ENCODE measurements at regions of chr10 and their contacts with region 1.

Region 1: GRCh38 chr10:87861953-87862678 is 1.2 kb downstream of the KLLN start:
- DNase-seq: peak; percentile 96
- H3K4me3 Mint-ChIP-seq: peak overlapping the region; percentile 90
- H3K27ac Mint-ChIP-seq: peak overlapping the region; percentile 94
- H3K4me1 Mint-ChIP-seq: peaks cover 33% of the 10 kb centered on the region
- H3K27me3 Mint-ChIP-seq: no peaks in the 10 kb centered on the region

Region 2: GRCh38 chr10:87659571-87660483 is 202.3 kb before region 1 on chr10 and contains the start of gene PAPSS2:
- CTCF ChIA-PET with region 1: no interaction called
- POLR2A ChIA-PET with region 1: no interaction called
- intact Hi-C with region 1: loop called (anchors 5 kb)
- DNase-seq: peak; percentile 34
- H3K4me3 Mint-ChIP-seq: peak within 1 kb of the TSS; percentile 66
- H3K27ac Mint-ChIP-seq: no peak within 1 kb of the TSS
- H3K4me1 Mint-ChIP-seq: peaks cover 13% of the 10 kb centered on the region
- H3K27me3 Mint-ChIP-seq: peaks cover 53% of the 10 kb centered on the region
- total RNA-seq, gene PAPSS2: 0.22 to 0.40 TPM

Region 3: DNA sequence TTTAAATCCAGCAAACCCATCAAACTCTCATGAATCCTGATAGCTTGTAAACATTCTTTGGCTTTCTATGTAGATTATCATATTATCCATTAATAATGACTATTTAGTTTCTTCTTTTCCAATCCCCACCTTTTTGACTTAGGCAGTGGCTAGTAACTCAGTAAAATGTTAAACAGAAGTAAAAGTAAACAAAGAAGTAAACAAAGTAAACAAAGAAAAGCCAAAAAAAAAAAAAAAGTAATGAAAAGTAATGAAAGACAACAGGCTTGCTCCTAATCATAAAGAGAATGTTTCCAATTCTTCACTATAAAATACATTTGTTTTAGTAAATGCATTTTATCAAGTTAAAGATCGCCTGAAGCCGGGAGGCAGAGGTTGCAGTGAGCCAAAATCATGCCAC is 54.0 kb before region 1 on chr10:
- CTCF ChIA-PET with region 1: no interaction called
- POLR2A ChIA-PET with region 1: no interaction called
- intact Hi-C with region 1: no loop called
- DNase-seq: no peak
- H3K4me3 Mint-ChIP-seq: no peak overlapping the region
- H3K27ac Mint-ChIP-seq: no peak overlapping the region
- H3K4me1 Mint-ChIP-seq: peaks cover 30% of the 10 kb centered on the region
- H3K27me3 Mint-ChIP-seq: no peaks in the 10 kb centered on the region

Region 4: DNA sequence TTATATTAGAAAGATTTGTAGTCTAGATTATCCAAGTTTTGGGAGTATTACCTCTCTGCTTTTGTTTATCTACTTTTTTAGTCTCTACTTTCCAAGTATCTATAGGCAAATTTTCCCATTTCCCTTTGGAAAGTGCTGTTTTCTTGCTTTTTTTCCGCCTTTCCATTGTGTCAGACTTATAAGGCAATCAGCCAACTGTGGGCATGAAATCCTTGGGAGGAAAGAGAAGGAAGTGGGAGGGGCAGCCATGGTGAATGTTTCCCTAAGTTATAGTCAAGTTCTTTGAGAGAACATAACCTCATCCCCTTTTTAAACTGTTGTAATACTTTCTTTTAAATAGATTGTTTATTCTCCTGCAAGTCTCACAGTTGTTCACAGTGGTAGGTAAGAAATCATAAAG is 53.9 kb after region 1 on chr10:
- CTCF ChIA-PET with region 1: no interaction called
- POLR2A ChIA-PET with region 1: no interaction called
- intact Hi-C with region 1: loop called (anchors 5 kb)
- DNase-seq: no peak
- H3K4me3 Mint-ChIP-seq: no peak overlapping the region
- H3K27ac Mint-ChIP-seq: no peak overlapping the region
- H3K4me1 Mint-ChIP-seq: peaks cover 43% of the 10 kb centered on the region
- H3K27me3 Mint-ChIP-seq: no peaks in the 10 kb centered on the region

Region 5: DNA sequence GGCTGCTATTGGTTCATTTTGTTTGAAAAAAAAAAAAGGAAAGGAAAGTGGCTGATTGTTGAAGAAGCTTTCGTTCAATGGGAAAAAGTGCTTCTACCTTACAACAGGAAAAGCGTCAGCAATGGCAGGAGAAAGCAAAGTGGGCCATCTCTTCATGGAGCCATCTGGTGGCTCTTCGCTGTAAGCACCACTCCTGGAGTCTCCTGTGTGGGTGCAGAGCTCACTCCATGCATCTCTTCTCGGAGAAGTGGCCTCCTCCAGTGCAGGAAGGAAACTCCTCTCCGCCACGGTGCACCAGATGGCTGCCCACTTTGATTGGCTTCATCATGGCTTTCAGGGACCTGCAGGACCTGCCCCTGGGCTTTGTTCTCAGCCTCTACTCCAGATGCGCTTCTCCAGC is 252.3 kb after region 1 on chr10:
- CTCF ChIA-PET with region 1: interaction called, 15 read pairs
- POLR2A ChIA-PET with region 1: interaction called, 8 read pairs
- intact Hi-C with region 1: loop called (anchors 1 kb)
- DNase-seq: peak; percentile 25
- H3K4me3 Mint-ChIP-seq: no peak overlapping the region
- H3K27ac Mint-ChIP-seq: no peak overlapping the region
- H3K4me1 Mint-ChIP-seq: peaks cover 6% of the 10 kb centered on the region
- H3K27me3 Mint-ChIP-seq: peaks cover 2% of the 10 kb centered on the region

Region 6: DNA sequence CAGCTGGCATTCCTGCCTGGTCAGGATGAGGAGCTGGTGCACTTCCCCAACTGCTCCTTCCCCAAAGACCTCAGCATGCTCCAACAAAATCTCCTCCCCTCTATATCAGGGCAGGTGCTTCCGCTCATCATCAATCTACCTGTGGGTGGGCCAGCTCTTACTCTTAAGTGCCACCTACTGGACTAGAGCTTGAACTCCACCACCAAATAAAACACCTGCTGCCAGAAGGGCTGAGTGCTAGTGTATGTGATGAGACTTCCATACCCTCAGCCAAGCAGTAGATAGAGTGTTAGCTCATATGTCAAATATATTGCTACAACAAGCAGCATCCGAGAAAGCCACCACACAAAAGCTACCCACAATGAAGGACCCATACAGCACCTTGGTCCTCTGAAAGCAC is 456.7 kb after region 1 on chr10:
- CTCF ChIA-PET with region 1: interaction called, 3 read pairs
- POLR2A ChIA-PET with region 1: no interaction called
- intact Hi-C with region 1: loop called (anchors 5 kb)
- DNase-seq: no peak
- H3K4me3 Mint-ChIP-seq: no peak overlapping the region
- H3K27ac Mint-ChIP-seq: no peak overlapping the region
- H3K4me1 Mint-ChIP-seq: no peaks in the 10 kb centered on the region
- H3K27me3 Mint-ChIP-seq: no peaks in the 10 kb centered on the region

Region 7: DNA sequence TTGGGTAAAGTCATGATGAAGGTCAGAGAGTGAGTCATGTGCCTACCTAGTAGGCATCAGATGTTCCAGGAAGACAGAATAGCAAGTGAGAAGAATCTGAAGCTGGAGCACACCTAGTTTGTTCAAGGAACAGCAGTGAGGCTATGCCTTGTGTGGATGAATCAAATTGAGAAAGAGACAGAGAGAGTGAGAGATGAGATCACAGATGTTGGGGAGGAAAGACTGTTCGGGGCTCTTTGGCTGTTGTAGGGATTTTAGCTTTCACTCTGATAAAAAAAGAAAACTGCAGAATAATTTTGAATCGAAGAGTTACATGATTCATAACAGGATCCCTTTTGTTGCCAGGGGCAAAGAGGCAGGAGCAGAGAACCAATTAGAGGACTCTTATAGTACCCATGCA is 808.4 kb after region 1 on chr10:
- CTCF ChIA-PET with region 1: no interaction called
- POLR2A ChIA-PET with region 1: no interaction called
- intact Hi-C with region 1: loop called (anchors 5 kb)
- DNase-seq: peak; percentile 33
- H3K4me3 Mint-ChIP-seq: no peak overlapping the region
- H3K27ac Mint-ChIP-seq: peak overlapping the region; percentile 21
- H3K4me1 Mint-ChIP-seq: peaks cover 18% of the 10 kb centered on the region
- H3K27me3 Mint-ChIP-seq: peaks cover 7% of the 10 kb centered on the region

Region 8: DNA sequence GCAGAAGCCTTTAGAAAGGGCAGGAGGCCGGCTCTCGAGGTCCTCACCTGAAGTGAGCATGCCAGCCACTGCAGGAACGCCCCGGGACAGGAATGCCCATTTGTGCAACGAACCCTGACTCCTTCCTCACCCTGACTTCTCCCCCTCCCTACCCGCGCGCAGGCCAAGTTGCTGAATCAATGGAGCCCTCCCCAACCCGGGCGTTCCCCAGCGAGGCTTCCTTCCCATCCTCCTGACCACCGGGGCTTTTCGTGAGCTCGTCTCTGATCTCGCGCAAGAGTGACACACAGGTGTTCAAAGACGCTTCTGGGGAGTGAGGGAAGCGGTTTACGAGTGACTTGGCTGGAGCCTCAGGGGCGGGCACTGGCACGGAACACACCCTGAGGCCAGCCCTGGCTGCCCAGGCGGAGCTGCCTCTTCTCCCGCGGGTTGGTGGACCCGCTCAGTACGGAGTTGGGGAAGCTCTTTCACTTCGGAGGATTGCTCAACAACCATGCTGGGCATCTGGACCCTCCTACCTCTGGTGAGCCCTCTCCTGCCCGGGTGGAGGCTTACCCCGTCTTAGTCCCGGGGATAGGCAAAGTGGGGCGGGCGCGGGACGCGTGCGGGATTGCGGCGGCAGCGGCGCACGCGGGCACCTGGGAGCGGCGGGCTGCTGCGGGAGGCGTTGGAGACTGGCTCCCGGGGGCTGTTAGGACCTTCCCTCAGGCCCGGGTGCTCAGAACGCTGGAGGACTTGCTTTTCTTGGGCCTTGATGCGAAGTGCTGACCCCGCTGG is 1128.5 kb after region 1 on chr10 and contains the start of gene FAS:
- CTCF ChIA-PET with region 1: no interaction called
- POLR2A ChIA-PET with region 1: no interaction called
- intact Hi-C with region 1: loop called (anchors 2 kb)
- DNase-seq: peak; percentile 94
- H3K4me3 Mint-ChIP-seq: peak within 1 kb of the TSS; percentile 86
- H3K27ac Mint-ChIP-seq: peak within 1 kb of the TSS; percentile 96
- H3K4me1 Mint-ChIP-seq: peaks cover 65% of the 10 kb centered on the region
- H3K27me3 Mint-ChIP-seq: no peaks in the 10 kb centered on the region
- total RNA-seq, gene FAS: 62.2 to 63.5 TPM

Measured in activated CD4-positive, alpha-beta memory T cell treated with anti-CD3 and anti-CD28 coated beads for 36 hours (primary cell).